ENCODE measurements at regions of chr12 and their contacts with region 1.

Region 1: DNA sequence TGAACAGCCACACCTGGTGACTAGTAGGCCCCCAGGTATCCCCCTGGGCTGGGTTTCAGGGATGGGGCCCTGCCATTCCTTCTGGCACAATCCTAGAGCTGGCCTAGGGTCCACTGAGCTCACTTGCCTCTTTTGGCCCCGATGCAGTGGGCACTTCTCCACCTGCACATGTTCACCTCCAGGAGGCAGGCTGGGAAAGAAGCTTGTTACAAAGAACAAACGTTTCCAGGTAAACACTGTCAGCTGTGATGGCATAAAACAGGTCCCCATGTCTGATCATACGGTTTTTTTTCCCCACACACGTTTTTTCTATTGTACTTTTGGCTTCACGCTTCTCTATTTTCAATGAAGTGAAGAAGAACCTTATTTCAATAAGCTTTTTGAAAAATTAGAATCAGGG is 15.8 kb upstream of the HVCN1 start:
- DNase-seq: no peak
- ATAC-seq: no peak
- H3K4me3 Mint-ChIP-seq: no peak overlapping the region
- H3K27ac Mint-ChIP-seq: no peak overlapping the region
- H3K4me1 Mint-ChIP-seq: peaks cover 11% of the 10 kb centered on the region
- H3K27me3 Mint-ChIP-seq: no peaks in the 10 kb centered on the region
- CTCF ChIP-seq: no peak

Region 2: GRCh38 chr12:110718222-110718908 is 13.6 kb after region 1 on chr12:
- CTCF ChIA-PET with region 1: no interaction called
- POLR2A ChIA-PET with region 1: interaction called, 5 read pairs
- intact Hi-C with region 1: loop called (anchors 2 kb)
- DNase-seq: no peak
- ATAC-seq: peak; percentile 84
- H3K4me3 Mint-ChIP-seq: peak overlapping the region; percentile 21
- H3K27ac Mint-ChIP-seq: peak overlapping the region; percentile 86
- H3K4me1 Mint-ChIP-seq: peaks cover 36% of the 10 kb centered on the region
- H3K27me3 Mint-ChIP-seq: no peaks in the 10 kb centered on the region
- CTCF ChIP-seq: no peak

Measured in activated B cell treated with CpG ODN at 0.5 μM for 24 hours (primary cell).